Psoas muscle (tissue), 8 donors: ENCODE measurements at regions of chr19 and their contacts with region 1.

Region 1: GRCh38 chr19:3224346-3225168 is at the start of gene CELF5:
- DNase-seq: peak in 1 of 2 donors; percentile 54
- ATAC-seq: peak in 2 of 4 donors; percentile 52 to 59
- H3K4me3 ChIP-seq: no peak within 1 kb of the TSS
- H3K27ac ChIP-seq: no peak within 1 kb of the TSS
- H3K4me1 ChIP-seq: no peaks in the 10 kb centered on the region
- H3K27me3 ChIP-seq: peaks cover 0 to 54% (median 17%) of the 10 kb centered on the region in 3 donors
- CTCF ChIP-seq: peak; percentile 59
- total RNA-seq, gene CELF5: not detected

Region 2: DNA sequence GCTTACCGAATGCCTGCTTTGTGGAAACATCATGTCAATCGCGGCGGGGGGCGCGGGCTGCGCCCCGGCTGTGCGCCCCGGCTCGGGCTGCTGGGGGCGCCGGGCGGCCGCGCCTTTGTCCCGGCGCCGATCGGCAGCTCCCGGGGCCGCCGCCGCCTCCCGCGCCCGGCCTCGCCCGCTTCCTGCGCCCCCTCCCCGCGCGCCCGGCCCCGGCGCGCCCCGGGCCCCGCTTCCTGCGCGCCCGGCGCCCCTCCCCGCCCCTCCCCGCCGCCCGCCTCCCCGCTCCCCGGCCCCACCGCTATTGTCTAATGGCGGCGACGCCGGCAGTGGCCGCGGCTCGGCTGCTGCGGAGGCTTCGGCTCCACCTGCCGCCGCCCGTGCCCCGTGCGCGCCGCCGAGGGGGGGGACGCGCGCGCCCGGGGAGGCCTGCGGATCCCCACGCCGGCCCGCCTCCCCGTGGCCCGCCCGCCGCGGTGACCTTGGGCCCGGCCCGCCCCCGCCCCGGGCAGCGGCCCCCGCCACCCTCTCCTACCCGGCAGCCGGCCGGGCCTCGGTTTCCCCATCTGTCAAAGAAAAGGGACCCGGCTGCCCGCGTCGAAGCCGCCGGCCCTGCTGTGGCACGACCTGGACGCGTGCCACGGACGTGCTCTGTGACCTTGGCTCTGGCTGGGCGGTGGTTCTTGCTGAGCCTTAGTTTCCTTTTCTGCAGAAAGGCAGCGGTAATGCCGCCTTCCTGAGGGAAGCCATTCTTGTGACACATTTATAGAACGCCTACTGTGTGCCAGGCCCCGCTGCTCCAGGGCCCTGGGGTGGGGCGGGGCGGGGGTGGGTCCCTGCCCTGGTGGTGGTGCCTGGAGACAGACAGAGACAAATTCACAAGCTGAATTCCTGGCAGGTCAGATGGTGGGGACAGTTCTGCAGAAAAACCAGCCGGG is 162.1 kb before region 1 on chr19 and contains the start of gene TLE5:
- intact Hi-C with region 1: no loop called
- DNase-seq: peak; percentile 75 to 86
- ATAC-seq: peak; percentile 71 to 80 (median 76)
- H3K4me3 ChIP-seq: peak within 1 kb of the TSS; percentile 79
- H3K27ac ChIP-seq: peak within 1 kb of the TSS; percentile 85
- H3K4me1 ChIP-seq: peaks cover 23% of the 10 kb centered on the region
- H3K27me3 ChIP-seq: no peaks in the 10 kb centered on the region
- CTCF ChIP-seq: no peak
- total RNA-seq, gene TLE5: 390 to 607 (median 551) TPM

Region 3: DNA sequence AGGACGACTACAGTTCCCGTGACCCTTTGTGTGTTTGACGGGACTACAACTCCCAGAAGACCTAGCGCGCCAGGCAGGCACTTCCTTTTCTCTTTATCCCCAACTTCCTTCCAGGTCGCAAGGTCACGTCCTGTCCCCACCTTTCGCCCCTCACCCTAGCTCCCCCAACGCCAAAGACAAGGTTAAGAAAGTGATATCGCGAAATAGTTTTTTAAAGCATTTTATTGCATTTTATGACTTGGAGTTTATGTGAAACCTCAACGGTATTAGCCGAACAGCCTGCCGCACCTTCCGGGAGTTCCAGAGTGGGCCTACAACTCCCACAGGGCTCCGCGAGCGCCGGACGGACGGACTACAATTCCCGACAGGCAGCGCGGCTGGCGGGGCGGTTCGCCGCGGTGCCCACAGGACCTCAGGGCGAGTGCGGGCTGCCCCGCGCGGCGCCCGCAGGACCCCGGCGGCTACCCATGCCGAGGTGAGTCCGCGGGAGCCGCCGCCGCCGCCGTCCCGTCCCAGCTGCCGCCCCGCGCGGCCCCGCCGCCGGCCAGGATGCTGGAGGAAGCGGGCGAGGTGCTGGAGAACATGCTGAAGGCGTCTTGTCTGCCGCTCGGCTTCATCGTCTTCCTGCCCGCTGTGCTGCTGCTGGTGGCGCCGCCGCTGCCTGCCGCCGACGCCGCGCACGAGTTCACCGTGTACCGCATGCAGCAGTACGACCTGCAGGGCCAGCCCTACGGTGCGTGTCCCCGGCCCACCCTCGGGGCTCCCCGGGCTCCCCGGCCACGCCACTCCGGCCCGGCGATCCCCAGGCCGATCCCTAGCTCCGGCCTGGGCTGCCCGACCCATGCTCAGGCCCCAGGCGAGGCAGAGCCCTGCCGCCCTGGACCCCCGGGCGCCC is 38.8 kb before region 1 on chr19 and contains the start of gene NCLN:
- intact Hi-C with region 1: no loop called
- DNase-seq: peak; percentile 95 to 97
- ATAC-seq: peak; percentile 97 to 98 (median 97)
- H3K4me3 ChIP-seq: peak within 1 kb of the TSS; percentile 84
- H3K27ac ChIP-seq: peak within 1 kb of the TSS; percentile 76
- H3K4me1 ChIP-seq: peaks cover 16% of the 10 kb centered on the region
- H3K27me3 ChIP-seq: no peaks in the 10 kb centered on the region
- CTCF ChIP-seq: no peak
- total RNA-seq, gene NCLN: 15.4 to 60.9 (median 28.5) TPM

Region 4: GRCh38 chr19:3304871-3305423 is 80.4 kb after region 1 on chr19:
- intact Hi-C with region 1: no loop called
- DNase-seq: peak; percentile 61 to 87
- ATAC-seq: peak; percentile 54 to 85 (median 64)
- H3K4me3 ChIP-seq: no peak overlapping the region
- H3K27ac ChIP-seq: no peak overlapping the region
- H3K4me1 ChIP-seq: no peaks in the 10 kb centered on the region
- H3K27me3 ChIP-seq: peaks cover 3 to 59% (median 6%) of the 10 kb centered on the region in 3 donors
- CTCF ChIP-seq: peak; percentile 87

Region 5: GRCh38 chr19:3479834-3480215 is 255.3 kb after region 1 on chr19:
- intact Hi-C with region 1: loop called in 1 of 2 experiments (anchors 10 kb)
- DNase-seq: no peak
- ATAC-seq: peak in 2 of 4 donors; percentile 25 to 50
- H3K4me3 ChIP-seq: no peak overlapping the region
- H3K27ac ChIP-seq: no peak overlapping the region
- H3K4me1 ChIP-seq: no peaks in the 10 kb centered on the region
- H3K27me3 ChIP-seq: peaks cover 0 to 45% (median 17%) of the 10 kb centered on the region in 3 donors
- CTCF ChIP-seq: no peak